Heart left ventricle (tissue), 16 donors: ENCODE measurements at regions of chr3 and their contacts with region 1.

Region 1: DNA sequence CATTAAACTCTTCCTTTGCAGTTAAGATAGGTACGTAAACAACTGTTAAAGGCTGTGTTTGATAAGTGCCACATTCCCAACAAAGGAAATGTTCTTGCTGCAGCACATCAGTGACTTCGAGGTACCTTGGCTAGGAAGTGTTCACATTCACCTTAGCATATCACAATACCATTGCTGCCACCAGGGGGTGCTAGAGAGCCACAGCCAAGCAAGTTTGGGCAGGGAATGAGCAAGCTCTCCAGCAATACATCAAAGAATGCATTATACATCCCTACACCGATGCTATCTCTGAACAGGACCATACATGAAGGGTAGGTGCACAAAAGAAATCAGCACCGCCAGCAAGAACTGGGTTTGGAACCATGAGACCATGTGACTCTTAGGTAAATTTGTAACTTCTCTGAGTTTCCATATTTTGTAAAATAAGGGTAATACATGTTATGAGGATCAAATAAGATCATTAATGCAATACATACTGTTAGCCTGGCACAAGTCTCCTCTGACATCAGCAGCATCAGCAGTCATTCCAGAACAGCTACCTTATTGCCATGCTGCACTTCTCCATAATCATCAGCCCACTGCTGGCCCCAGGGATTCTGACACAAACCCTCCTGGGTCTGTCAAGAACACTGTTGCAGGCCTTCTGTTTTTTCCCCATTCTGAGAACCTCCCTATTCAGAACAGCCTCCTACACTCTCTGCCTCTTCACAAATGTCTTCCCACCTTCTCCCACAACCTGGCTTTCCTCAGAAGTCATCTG is 37.6 kb downstream of the RYK start:
- DNase-seq: peak; percentile 71 to 81 (median 76)
- ATAC-seq: peak; percentile 70 to 86 (median 83)
- H3K4me3 ChIP-seq: no peak overlapping the region
- H3K27ac ChIP-seq: no peak overlapping the region
- H3K4me1 ChIP-seq: peaks cover 0 to 28% (median 4%) of the 10 kb centered on the region in 12 donors
- H3K27me3 ChIP-seq: no peaks in the 10 kb centered on the region
- CTCF ChIP-seq: peak; percentile 90 to 99 (median 98)
- POLR2A ChIP-seq: no peak

Region 2: GRCh38 chr3:133821767-133822638 is 391.1 kb before region 1 on chr3:
- intact Hi-C with region 1: loop called in 3 of 10 experiments (anchors 10 kb)
- DNase-seq: peak in 4 of 5 donors; percentile 71 to 89 (median 78)
- ATAC-seq: peak in 3 of 4 donors; percentile 44 to 80 (median 48)
- H3K4me3 ChIP-seq: no peak overlapping the region
- H3K27ac ChIP-seq: peak overlapping the region in 2 of 12 donors; percentile 2 to 23
- H3K4me1 ChIP-seq: peaks cover 0 to 11% (median 4%) of the 10 kb centered on the region in 12 donors
- H3K27me3 ChIP-seq: no peaks in the 10 kb centered on the region
- CTCF ChIP-seq: peak in 6 of 12 donors; percentile 11 to 61 (median 32)
- POLR2A ChIP-seq: no peak

Region 3: DNA sequence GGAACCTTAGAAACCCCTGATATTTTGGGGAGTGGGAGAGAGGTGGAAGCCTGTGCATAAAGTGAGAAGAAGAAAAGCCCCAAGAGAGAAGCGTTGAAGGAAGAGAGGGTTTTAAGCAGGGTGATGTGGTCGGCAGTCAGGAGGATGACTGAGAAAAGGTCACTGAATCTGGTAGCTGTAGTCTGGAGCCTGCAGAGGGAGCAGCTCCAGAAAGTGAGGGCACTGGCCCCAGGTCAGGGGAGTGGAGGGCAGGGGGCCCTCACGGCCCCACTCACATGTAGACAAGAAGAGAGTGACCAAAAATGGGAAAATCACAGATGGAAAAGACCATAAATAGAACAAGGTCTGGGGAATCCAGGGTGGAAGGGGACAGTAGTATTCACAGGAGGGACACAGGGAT is 67.9 kb before region 1 on chr3:
- intact Hi-C with region 1: no loop called
- DNase-seq: no peak
- ATAC-seq: peak in 2 of 4 donors; percentile 9 to 21
- H3K4me3 ChIP-seq: no peak overlapping the region
- H3K27ac ChIP-seq: peak overlapping the region in 2 of 12 donors; percentile 9 to 21
- H3K4me1 ChIP-seq: peaks cover 0 to 31% (median 11%) of the 10 kb centered on the region in 12 donors
- H3K27me3 ChIP-seq: no peaks in the 10 kb centered on the region
- CTCF ChIP-seq: peak in 1 of 12 donors; percentile 17
- POLR2A ChIP-seq: no peak

Region 4: DNA sequence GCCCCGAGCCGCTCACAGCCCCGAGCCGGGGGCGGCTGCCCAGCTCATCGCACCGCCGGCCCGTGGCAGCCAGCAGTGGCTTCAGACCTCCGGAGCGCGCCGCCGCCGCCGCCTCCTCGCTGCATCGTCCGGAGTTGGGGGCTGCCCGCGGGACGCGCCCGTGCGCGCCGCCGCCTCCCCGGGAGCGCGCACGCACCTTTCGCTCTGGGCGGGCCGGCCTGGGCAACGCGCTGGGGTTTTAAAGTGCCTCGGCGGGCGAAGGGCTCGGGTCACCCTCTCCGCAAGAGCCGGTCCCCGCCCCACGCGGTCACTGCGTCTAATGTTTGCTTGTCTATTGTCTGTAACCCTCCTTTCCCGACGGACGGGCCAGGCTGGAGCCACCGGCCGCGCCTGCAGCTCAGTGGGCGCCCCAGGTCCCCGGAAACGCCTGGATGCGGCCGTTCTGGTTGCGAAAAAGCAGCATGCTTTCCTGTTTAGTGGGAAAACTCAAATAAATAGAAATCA is 37.7 kb after region 1 on chr3 and contains the start of gene RYK:
- intact Hi-C with region 1: loop called in 1 of 10 experiments (anchors 5 kb)
- DNase-seq: peak; percentile 77 to 92 (median 88)
- ATAC-seq: peak; percentile 82 to 95 (median 95)
- H3K4me3 ChIP-seq: peak within 1 kb of the TSS; percentile 54 to 90 (median 77)
- H3K27ac ChIP-seq: peak within 1 kb of the TSS; percentile 79 to 98 (median 90)
- H3K4me1 ChIP-seq: peaks cover 0 to 52% (median 38%) of the 10 kb centered on the region in 12 donors
- H3K27me3 ChIP-seq: no peaks in the 10 kb centered on the region
- CTCF ChIP-seq: no peak
- POLR2A ChIP-seq: peak in 1 of 2 donors; percentile 76
- total RNA-seq, gene RYK: 32.9 to 43.7 (median 39.5) TPM

Region 5: DNA sequence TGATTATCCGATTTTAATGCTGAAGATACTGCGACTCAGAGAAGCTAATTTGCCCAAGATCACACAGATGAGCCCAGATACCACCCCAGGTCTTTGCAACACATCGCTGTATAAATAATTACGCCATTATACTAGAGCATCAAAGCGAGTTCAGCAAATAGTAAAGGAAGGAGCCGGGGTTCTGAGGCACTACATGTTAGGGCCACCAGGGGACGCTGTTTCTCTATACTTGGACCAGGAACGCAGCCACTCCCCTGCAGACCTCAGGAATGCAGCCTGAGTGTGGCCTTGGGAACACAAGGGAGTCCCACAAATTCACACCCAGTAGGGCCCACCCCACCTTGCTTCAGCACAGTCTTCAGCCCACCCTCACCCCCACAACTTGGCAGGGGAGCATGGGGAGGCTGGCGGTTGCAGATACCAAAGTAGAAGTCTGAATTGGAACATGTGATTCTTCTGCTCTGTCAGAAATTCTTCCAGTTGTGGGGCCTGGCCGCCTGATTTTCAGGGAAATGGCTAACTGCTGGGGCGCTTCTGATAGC is 95.3 kb after region 1 on chr3:
- intact Hi-C with region 1: loop called in 1 of 10 experiments (anchors 5 kb)
- DNase-seq: peak; percentile 75 to 85 (median 81)
- ATAC-seq: peak; percentile 63 to 75 (median 68)
- H3K4me3 ChIP-seq: peak overlapping the region in 4 of 12 donors; percentile 26 to 39 (median 36)
- H3K27ac ChIP-seq: peak overlapping the region in 11 of 12 donors; percentile 19 to 82 (median 72)
- H3K4me1 ChIP-seq: peaks cover 2 to 34% (median 23%) of the 10 kb centered on the region in 12 donors
- H3K27me3 ChIP-seq: peaks cover 0 to 4% (median 0%) of the 10 kb centered on the region in 9 donors
- CTCF ChIP-seq: peak; percentile 97 to 100 (median 99)
- POLR2A ChIP-seq: no peak

Region 6: DNA sequence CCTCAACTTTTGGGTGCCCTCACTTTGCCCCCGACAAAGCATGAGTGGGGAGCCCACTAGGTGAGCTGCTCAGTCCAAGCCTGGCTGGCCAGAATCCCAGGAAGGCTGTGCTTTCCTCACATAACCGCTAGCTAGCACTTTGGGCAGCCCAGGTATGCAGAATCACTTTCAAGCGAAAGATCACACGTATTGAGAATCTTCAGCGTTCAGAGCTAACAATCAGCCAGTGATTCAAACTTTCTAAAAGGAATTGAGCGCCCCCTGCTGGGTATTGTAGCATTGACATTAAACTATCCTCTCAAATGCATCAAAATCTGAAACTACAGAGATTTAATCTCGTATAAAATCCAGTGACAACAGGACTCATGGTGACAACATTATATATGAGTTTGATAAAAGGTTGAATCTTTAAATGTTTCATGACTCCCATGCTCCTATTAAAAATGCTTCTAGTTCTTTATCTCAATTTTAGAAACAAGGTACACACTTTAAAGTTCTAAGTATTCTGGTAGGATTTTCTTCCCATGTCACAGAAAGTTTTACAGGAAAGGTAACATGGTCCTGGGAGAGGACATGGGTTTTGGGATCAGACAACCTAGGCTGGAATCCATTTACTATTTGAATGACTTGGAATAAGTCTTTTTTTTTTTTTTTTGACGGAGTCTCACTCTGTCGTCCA is 260.9 kb after region 1 on chr3:
- intact Hi-C with region 1: loop called in 9 of 10 experiments (anchors 2 to 10 kb)
- DNase-seq: peak in 4 of 5 donors; percentile 60 to 77 (median 76)
- ATAC-seq: peak in 3 of 4 donors; percentile 39 to 64 (median 39)
- H3K4me3 ChIP-seq: no peak overlapping the region
- H3K27ac ChIP-seq: no peak overlapping the region
- H3K4me1 ChIP-seq: peaks cover 0 to 33% (median 8%) of the 10 kb centered on the region in 12 donors
- H3K27me3 ChIP-seq: no peaks in the 10 kb centered on the region
- CTCF ChIP-seq: peak; percentile 72 to 89 (median 84)
- POLR2A ChIP-seq: no peak

Region 7: DNA sequence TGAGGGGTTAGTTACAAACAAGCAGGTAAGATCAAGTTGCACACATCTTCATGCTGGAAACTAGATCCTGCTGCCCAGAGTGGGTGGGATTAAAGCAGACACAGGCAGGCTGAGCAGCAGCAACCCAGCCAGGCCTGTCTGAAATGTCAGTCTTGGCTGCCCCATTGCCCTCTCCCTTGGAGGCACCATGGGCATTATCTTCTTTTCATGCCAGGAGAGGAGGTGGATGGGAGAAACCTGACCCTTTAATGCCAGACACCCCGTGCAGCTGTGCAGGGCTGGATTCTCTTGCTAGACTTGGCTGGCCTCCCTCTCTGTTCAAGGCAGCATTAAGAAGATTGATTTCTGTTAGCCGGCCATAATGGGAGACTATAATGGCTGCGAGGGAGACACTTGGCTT is 558.9 kb after region 1 on chr3:
- intact Hi-C with region 1: no loop called
- DNase-seq: no peak
- ATAC-seq: no peak
- H3K4me3 ChIP-seq: no peak overlapping the region
- H3K27ac ChIP-seq: no peak overlapping the region
- H3K4me1 ChIP-seq: no peaks in the 10 kb centered on the region
- H3K27me3 ChIP-seq: no peaks in the 10 kb centered on the region
- CTCF ChIP-seq: no peak
- POLR2A ChIP-seq: no peak